ENCODE measurements at regions of chr19 and their contacts with region 1.

Region 1: DNA sequence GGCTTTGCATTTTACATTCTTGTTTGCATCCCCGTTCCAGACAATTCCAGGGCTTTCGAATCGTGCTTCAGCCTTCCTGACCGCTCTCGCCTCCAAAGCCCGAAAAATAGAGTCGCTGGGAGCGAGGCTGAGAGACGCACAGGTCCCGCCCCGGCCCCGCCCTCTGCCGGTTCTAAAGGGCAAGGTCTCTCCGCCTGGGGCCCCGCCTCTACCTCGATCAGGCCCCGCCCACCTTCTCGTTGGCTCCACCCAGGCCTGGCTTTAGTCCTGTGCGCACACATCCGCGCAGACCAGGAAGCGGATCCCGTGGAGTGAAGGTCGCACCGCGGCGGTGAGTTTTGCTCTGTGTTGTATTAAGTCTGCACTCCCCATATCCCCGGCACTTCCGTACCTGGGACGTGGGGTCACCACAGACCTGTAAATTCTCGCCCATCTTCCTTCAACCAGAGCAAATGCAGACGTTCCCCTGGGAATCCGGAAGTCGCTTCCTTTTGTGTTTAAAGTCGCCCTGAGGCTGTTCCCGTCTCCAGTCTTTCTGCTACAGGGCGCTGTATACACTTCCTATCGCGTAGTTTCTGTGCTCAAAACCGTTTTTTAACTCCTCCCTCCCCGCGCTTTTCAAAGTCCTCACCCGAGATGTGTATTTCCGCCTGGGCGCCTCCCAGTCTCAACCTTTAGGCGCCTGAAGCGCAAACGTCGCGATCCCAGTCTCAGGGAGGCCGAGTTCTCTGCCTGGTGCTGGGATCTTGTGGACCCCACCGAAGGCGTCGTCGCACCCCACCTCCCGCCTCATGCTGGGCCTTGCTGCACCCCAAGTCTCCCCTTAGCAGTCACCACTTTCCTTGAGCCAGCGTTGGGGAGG is at the start of gene ZNF701:
- H3K4me3 Mint-ChIP-seq: peak within 1 kb of the TSS; percentile 87
- H3K27ac Mint-ChIP-seq: peak within 1 kb of the TSS; percentile 94
- H3K4me1 Mint-ChIP-seq: peaks cover 25% of the 10 kb centered on the region
- H3K27me3 Mint-ChIP-seq: no peaks in the 10 kb centered on the region

Region 2: DNA sequence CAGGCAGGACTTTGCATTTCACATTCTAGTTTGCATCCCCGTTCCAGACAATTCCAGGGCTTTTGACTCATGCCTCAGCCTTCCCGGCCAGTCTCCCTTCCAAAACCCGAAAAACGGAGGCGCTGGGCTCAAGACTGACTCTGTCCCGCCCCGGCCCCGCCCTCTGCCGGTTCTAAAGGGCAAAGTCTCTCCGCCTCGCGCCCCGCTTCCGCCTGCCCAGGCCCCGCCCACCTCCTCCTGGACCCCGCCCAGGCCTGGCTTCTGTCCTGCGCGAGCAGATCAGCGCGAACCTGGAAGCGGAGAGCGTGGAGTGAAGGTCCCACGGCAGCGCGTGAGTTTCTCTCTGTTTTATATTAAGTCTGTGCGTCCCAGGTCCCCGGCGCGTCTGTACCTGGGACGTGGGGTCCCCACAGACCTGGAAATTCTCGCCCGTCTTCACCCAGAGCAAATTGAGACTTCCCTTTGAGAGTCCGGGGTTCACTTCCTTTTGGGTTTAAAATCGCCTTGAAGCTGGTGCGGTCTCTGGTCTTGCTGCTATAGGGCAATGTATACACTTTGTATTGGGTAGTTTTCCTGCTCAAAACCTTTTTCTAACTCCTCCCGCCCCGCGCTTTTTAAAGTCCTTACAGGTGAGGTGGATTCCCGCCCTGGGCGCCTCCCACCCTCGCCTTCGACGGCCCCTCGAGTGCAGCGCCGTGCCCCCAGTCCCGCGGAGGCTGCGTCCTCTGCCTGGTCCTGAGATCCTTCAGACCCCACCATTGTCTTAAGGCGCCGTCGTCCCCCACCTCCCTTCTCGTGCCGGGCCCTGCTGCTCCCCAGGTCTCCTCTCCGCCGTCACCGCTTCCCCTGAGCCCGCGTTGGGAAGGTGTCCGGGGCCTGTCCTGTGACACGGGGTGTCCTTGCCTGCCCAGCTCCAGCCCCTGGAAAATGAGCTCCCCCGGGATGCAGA is 31.1 kb after region 1 on chr19:
- intact Hi-C with region 1: loop called (anchors 2 kb)
- H3K4me3 Mint-ChIP-seq: peak overlapping the region; percentile 86
- H3K27ac Mint-ChIP-seq: peak overlapping the region; percentile 74
- H3K4me1 Mint-ChIP-seq: peaks cover 14% of the 10 kb centered on the region
- H3K27me3 Mint-ChIP-seq: no peaks in the 10 kb centered on the region

Region 3: GRCh38 chr19:52789421-52789820 is 219.2 kb after region 1 on chr19:
- intact Hi-C with region 1: no loop called
- H3K4me3 Mint-ChIP-seq: no peak overlapping the region
- H3K27ac Mint-ChIP-seq: no peak overlapping the region
- H3K4me1 Mint-ChIP-seq: peaks cover 17% of the 10 kb centered on the region
- H3K27me3 Mint-ChIP-seq: peaks cover 8% of the 10 kb centered on the region

Measured in dendritic cell treated with granulocyte-macrophage colony-stimulating factor and Interleukin-4, amounts not matched to agents 40 ng/mL and 50 ng/mL, for 4 days (primary cell).